Gastrocnemius medialis (tissue), 4 donors: ENCODE measurements at regions of chr1 and their contacts with region 1.

Region 1: DNA sequence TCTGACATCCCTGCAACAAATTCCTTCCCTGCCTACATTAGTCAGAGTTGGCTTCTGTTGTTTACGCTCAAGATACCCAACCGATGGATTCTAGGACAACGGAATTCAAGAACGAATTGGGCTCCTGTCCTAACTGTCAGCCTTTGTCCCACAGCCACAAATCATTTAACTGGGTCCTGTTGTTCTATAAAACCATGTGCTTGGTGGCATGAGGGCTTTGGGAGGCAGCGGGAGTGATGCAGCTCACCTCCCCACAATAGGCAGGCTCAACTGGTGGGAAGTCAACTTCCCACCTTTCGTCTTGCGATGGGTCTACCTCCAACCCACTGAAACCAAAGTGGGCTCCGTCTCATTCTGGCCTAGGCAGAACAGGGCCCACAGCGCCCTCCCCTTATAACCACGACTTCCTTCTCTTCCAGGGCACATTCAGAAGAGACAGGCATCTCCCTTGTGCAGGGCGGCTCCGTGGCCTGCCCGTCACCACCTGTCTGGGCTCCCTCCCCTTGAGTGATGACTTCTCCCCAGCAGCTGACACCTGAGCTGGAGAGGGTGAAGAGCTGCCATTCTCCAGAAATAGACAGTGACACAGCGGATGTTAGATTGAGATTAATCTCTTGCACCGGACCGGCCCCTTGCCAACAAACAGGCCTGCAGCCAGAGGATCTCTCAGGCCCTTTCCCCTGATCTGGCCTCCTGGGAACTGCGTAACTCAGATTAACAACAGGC is 26.5 kb downstream of the LRRC38 start:
- DNase-seq: peak; percentile 93 to 97
- ATAC-seq: peak; percentile 89 to 92
- H3K4me3 ChIP-seq: no peak overlapping the region
- H3K27ac ChIP-seq: peak overlapping the region; percentile 86 to 97 (median 94)
- H3K4me1 ChIP-seq: peaks cover 35 to 45% of the 10 kb centered on the region in 2 donors
- H3K27me3 ChIP-seq: no peaks in the 10 kb centered on the region
- CTCF ChIP-seq: no peak
- POLR2A ChIP-seq: peak; percentile 62 to 65

Region 2: DNA sequence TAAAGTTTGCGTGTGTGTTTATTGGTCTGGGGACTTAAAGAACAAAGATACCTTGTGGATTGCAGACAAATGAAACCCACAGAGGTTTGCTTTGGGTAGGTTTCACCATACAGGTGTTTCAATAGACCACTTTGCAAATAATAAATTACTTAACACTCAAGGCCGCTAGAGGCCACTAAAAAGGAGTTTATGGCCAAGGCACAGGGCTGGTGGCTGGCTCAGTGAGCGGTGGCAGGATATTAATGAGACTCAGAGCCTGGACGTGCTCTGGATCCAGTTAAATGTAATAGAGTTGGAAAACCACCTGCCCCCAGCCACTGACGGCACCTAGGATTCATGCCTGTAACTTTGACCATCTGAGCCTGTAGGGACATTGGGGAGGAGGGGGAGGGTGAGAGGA is 18.0 kb before region 1 on chr1:
- in situ Hi-C with region 1: no loop called
- intact Hi-C with region 1: no loop called
- DNase-seq: peak in 1 of 2 donors; percentile 66
- ATAC-seq: peak; percentile 82 to 88
- H3K4me3 ChIP-seq: no peak overlapping the region
- H3K27ac ChIP-seq: peak overlapping the region; percentile 2 to 70 (median 60)
- H3K4me1 ChIP-seq: peaks cover 0 to 2% of the 10 kb centered on the region in 2 donors
- H3K27me3 ChIP-seq: no peaks in the 10 kb centered on the region
- CTCF ChIP-seq: peak; percentile 36 to 54 (median 43)
- POLR2A ChIP-seq: no peak

Region 3: DNA sequence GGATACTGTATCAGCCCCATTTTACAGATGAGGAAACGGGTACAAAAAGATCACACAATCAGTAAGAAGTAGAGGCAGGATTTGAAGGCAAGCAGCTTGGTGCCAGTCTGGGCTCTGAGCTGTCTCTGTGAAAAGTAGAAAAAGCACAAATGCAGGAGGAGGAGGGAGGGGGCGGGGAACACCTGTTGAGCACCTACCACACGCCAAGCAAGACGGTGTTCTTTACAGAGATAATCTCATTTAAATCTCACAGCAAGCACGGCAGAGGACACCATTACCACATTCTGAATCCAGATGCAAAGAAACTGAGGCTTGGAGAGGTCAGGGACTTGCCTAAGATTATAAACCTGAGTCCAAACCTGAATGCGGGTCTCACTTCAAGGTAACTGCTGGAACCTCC is 23.2 kb after region 1 on chr1:
- in situ Hi-C with region 1: no loop called
- intact Hi-C with region 1: loop called (anchors 2 kb)
- DNase-seq: no peak
- ATAC-seq: no peak
- H3K4me3 ChIP-seq: peak overlapping the region in 1 of 4 donors; percentile 73
- H3K27ac ChIP-seq: peak overlapping the region; percentile 90 to 97 (median 94)
- H3K4me1 ChIP-seq: peaks cover 53 to 62% of the 10 kb centered on the region in 2 donors
- H3K27me3 ChIP-seq: no peaks in the 10 kb centered on the region
- CTCF ChIP-seq: no peak
- POLR2A ChIP-seq: no peak

Region 4: GRCh38 chr1:13523780-13524477 is 36.6 kb after region 1 on chr1:
- in situ Hi-C with region 1: no loop called
- intact Hi-C with region 1: no loop called
- DNase-seq: no peak
- ATAC-seq: no peak
- H3K4me3 ChIP-seq: no peak overlapping the region
- H3K27ac ChIP-seq: no peak overlapping the region
- H3K4me1 ChIP-seq: no peaks in the 10 kb centered on the region
- H3K27me3 ChIP-seq: no peaks in the 10 kb centered on the region
- CTCF ChIP-seq: no peak
- POLR2A ChIP-seq: no peak